ENCODE measurements at regions of chr10 and their contacts with region 1.

Region 1: DNA sequence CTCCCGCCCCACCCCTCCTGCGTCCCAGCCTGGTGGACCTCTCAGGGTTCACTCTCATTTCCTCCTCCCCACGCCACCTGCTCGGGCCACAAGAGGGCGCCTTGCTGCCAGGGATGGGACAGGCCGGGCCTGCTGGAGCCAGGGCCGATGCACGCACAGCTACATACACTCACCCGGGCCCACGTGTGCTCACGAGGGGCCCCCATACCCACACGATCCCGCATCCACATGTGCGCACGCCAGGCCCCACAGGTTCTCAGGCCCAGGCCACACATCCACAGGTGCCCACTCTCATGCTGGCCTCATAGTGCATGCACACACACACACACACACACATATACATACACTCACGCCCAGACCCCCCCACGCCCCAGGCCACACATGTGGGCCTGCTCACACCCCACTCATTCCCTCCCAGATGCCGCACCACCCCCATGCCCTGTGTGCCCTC is 68.6 kb downstream of the LHPP start:
- DNase-seq: peak; percentile 64 to 93
- H3K4me3 ChIP-seq: no peak overlapping the region
- H3K4me1 ChIP-seq: no peaks in the 10 kb centered on the region
- H3K27me3 ChIP-seq: no peaks in the 10 kb centered on the region

Region 2: GRCh38 chr10:123689880-123690279 is 840.4 kb before region 1 on chr10:
- in situ Hi-C with region 1: no loop called
- DNase-seq: no peak
- H3K4me3 ChIP-seq: no peak overlapping the region
- H3K4me1 ChIP-seq: no peaks in the 10 kb centered on the region
- H3K27me3 ChIP-seq: no peaks in the 10 kb centered on the region

Region 3: GRCh38 chr10:124827474-124827873 is 297.2 kb after region 1 on chr10:
- in situ Hi-C with region 1: loop called (anchors 5 kb)
- DNase-seq: peak in 1 of 2 experiments; percentile 17
- H3K4me3 ChIP-seq: no peak overlapping the region
- H3K4me1 ChIP-seq: no peaks in the 10 kb centered on the region
- H3K27me3 ChIP-seq: no peaks in the 10 kb centered on the region

Region 4: DNA sequence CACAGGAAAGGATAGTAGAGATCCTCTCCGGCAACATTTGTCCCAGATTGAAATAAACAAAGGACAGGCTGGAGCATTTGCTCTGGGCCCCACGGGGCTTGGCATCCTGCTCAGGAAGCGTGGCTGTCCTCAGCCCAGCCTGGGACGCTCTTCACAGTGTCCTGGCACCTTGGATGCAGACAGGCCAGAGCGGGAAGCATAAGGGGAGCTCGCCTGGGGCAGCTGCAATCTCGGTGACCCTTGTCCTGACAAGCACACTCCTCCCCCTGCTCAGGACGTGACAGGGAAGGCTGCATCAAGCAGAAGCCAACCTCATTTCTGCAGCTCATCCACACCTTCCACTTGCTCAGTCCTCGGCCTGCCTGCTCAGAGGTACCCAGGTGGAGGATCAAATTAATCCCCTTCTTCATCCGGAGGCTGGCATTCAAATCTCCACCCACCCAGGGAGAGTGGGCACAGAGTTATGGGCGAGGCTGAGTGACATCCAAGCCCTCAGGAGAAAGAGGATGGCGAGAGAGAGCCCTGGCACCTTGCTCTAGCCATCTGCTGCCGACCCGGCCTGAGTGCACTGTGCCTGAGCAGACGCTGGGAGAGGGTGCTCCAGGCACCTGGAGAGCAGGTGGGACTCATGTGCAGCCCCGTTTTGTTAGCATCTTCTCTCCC is 319.0 kb after region 1 on chr10:
- in situ Hi-C with region 1: no loop called
- DNase-seq: no peak
- H3K4me3 ChIP-seq: no peak overlapping the region
- H3K4me1 ChIP-seq: no peaks in the 10 kb centered on the region
- H3K27me3 ChIP-seq: no peaks in the 10 kb centered on the region

Region 5: GRCh38 chr10:124992462-124993344 is 462.5 kb after region 1 on chr10:
- in situ Hi-C with region 1: loop called (anchors 25 kb)
- DNase-seq: peak; percentile 42 to 80
- H3K4me3 ChIP-seq: no peak overlapping the region
- H3K4me1 ChIP-seq: no peaks in the 10 kb centered on the region
- H3K27me3 ChIP-seq: no peaks in the 10 kb centered on the region